Posterior vena cava (tissue), 2 donors: ENCODE measurements at regions of chr5 and their contacts with region 1.

Region 1: DNA sequence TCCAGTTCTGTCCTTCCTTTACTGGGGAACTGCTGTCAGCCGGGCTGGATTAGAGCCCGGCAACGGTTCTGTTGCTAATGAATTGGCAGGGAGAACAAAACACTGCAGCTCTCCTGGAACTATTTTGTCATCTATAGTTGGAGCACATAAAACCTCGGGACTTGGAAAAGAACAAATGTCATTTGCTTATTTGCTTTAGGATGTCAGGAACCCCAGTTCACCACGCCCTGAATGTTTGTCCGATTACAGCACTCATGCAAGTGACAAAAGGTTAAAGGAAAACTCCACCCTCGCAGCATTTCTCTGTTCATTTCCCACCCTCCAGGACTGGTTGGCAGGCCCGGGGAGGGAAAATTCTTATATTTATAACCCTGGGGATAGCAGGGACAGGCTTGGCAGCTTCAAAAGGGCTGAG is 66.4 kb upstream of the PLPP1 start:
- DNase-seq: peak; percentile 94

Region 2: GRCh38 chr5:55534436-55535198 is 66.6 kb before region 1 on chr5 and contains the start of gene PLPP1:
- intact Hi-C with region 1: loop called (anchors 10 kb)
- DNase-seq: peak; percentile 96
- total RNA-seq, gene PLPP1: 274 to 337 TPM

Region 3: DNA sequence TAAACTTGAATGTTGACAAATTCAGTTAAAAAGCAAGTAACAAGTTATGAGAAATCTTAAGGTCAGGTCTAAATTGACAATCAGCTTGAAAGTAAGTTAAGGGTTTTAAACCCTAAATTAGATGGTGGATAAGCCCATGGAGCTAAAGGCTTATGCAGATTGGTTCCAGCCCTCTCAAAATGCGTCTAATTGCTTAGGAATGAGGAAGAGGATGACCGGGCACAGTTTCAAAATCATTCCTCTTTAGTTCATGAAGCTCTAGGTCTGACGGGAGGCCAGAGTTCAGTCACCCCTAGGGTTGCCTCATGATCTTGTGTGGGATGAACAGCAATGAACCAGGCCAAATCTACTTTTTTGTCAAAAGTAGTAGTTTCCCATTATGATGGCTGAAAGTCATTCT is 35.5 kb after region 1 on chr5:
- intact Hi-C with region 1: loop called in 1 of 2 experiments (anchors 5 kb)
- DNase-seq: no peak